CD4-positive, alpha-beta T cell (primary cell): ENCODE measurements at regions of chr13 and their contacts with region 1.

Region 1: DNA sequence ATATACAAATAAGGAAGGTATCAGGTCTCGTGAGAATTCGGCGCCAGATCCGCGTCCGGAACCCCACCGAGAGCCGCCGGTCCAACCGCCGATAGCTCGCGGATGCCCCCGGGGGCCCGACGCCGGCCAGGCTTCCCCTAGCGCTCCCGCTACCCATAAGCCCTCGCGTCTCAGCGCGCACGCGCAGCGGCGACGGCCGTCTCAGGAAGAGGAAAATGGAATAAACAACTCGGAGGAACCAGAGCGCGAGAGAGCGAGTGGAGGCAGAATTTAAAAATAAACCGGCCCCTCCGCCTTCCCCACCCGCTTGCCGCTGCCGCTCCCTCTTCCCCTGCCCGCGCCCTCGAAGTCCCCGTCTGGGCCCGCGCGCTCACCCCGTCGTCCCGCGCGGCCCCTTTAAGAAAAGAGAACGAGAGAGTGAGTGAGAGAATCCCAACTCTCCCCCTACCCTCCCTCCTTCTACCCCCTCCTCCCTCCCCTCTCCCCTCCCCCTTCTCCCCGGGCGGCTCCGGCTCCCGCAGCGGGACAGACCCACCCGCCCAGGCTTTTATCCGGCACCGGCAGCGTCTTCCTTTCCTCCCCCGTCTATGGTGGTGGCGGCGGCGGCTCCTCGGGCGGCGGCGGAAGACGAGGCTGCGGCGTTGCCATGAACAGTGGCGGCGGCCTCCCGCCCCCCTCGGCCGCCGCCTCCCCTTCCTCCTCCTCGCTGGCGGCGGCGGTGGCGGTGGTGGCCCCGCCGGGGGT is at the start of gene PAN3:
- DNase-seq: peak; percentile 85 to 97 (median 91)
- ATAC-seq: peak; percentile 50
- H3K4me3 ChIP-seq: peak within 1 kb of the TSS; percentile 81
- H3K4me3 Mint-ChIP-seq: peak within 1 kb of the TSS; percentile 95
- H3K27ac ChIP-seq: peak within 1 kb of the TSS; percentile 93 to 99
- H3K27ac Mint-ChIP-seq: peak within 1 kb of the TSS; percentile 99
- H3K4me1 ChIP-seq: peaks cover 37% of the 10 kb centered on the region
- H3K4me1 Mint-ChIP-seq: peaks cover 53% of the 10 kb centered on the region
- H3K27me3 ChIP-seq: no peaks in the 10 kb centered on the region
- H3K27me3 Mint-ChIP-seq: no peaks in the 10 kb centered on the region
- CTCF ChIP-seq: no peak
- total RNA-seq, gene PAN3: 56.9 to 59.5 TPM

Region 2: DNA sequence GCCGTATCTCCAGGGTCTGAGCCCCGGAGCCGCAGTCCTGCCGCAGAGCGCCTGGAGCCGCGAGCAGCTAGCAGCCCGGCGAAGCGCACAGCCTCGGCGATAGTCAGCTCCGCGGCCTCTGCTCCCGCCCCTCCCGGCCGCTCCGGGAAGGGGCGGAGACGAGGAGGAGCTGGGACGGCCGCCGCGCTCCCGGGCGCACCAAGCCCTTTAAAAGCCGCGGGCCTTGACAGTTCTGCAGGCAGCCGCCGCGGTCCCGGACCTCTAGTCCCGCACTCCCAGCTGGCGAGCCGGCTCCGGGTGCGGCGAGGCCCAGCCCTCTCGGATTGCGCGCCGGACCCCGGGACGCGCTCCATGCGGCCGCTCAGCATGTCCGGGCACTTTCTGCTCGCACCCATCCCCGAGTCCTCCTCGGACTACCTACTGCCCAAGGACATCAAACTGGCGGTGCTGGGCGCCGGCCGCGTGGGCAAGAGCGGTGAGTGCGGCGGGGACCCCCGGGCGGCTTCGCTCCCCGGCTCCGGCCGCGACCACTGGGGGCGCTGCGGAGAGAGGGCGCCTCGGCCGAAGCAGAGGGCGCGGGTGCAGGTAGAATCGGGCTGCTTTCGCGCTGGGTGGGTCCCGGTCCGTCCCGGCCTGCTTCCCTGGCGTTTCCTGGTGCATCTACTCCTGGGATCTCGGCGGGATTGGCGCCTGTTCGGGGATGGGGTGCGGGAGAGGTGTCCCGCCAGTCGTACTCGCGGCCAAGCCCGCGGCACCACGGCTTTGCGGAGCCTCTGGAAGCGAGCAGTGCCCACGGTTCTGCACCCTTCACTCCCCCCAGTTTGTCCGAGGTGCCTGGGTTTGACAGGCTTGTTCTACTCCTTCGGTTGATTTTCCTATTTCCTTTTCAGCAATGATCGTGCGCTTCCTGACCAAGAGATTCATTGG is 867.3 kb before region 1 on chr13 and contains the start of gene RASL11A:
- CTCF ChIA-PET with region 1: no interaction called
- POLR2A ChIA-PET with region 1: no interaction called
- intact Hi-C with region 1: loop called in 1 of 2 experiments (anchors 5 kb)
- DNase-seq: peak; percentile 52 to 85 (median 68)
- ATAC-seq: peak; percentile 91
- H3K4me3 ChIP-seq: peak within 1 kb of the TSS; percentile 73
- H3K4me3 Mint-ChIP-seq: peak within 1 kb of the TSS; percentile 92
- H3K27ac ChIP-seq: no peak within 1 kb of the TSS
- H3K27ac Mint-ChIP-seq: peak within 1 kb of the TSS; percentile 68
- H3K4me1 ChIP-seq: peaks cover 17% of the 10 kb centered on the region
- H3K4me1 Mint-ChIP-seq: peaks cover 34% of the 10 kb centered on the region
- H3K27me3 ChIP-seq: peaks cover 5 to 8% of the 10 kb centered on the region in 2 experiments
- H3K27me3 Mint-ChIP-seq: peaks cover 14% of the 10 kb centered on the region
- CTCF ChIP-seq: peak; percentile 99
- total RNA-seq, gene RASL11A: 2.9 to 4.7 TPM

Region 3: GRCh38 chr13:27449936-27450828 is 688.0 kb before region 1 on chr13 and contains the start of gene MTIF3:
- CTCF ChIA-PET with region 1: no interaction called
- POLR2A ChIA-PET with region 1: interaction called, 3 read pairs
- intact Hi-C with region 1: loop called in 1 of 2 experiments (anchors 5 kb)
- DNase-seq: peak; percentile 95 to 99 (median 97)
- ATAC-seq: peak; percentile 79
- H3K4me3 ChIP-seq: peak within 1 kb of the TSS; percentile 83
- H3K4me3 Mint-ChIP-seq: peak within 1 kb of the TSS; percentile 98
- H3K27ac ChIP-seq: peak within 1 kb of the TSS; percentile 95 to 97
- H3K27ac Mint-ChIP-seq: peak within 1 kb of the TSS; percentile 97
- H3K4me1 ChIP-seq: peaks cover 58% of the 10 kb centered on the region
- H3K4me1 Mint-ChIP-seq: peaks cover 74% of the 10 kb centered on the region
- H3K27me3 ChIP-seq: no peaks in the 10 kb centered on the region
- H3K27me3 Mint-ChIP-seq: no peaks in the 10 kb centered on the region
- CTCF ChIP-seq: peak; percentile 31
- total RNA-seq, gene MTIF3: 13.6 to 14.5 TPM

Region 4: DNA sequence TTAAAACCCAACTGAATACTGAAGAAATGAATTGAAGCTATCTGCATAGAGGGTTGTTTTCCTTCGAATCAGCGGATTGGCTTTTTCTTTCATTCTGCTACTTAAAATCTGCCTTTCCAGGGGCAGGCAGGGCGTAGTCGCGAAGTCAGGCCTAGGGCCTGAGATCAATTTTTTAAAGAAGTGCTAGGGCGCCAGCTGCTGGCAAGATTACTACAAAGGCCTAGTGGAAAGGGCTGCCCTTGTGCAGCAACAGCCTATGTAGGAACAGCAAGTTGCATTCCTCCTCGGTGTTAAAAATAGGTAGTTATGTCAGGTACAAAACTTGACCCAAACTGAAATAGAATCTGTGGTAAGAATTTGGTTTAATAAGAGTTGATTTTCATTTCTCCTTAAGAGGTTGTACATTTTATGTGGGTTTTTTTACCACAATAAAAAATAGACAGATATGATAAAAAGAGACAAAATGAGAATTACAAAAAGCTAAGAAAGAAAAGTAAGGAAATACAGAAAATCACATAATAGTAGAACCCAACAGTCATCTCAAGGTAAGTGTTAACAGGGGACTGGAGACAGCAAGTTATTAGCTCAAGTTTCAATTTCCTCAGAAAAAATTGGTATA is 140.2 kb before region 1 on chr13:
- CTCF ChIA-PET with region 1: no interaction called
- POLR2A ChIA-PET with region 1: no interaction called
- intact Hi-C with region 1: no loop called
- DNase-seq: peak in 6 of 14 experiments; percentile 6 to 27 (median 24)
- ATAC-seq: peak; percentile 34
- H3K4me3 ChIP-seq: no peak overlapping the region
- H3K4me3 Mint-ChIP-seq: no peak overlapping the region
- H3K27ac ChIP-seq: no peak overlapping the region
- H3K27ac Mint-ChIP-seq: no peak overlapping the region
- H3K4me1 ChIP-seq: no peaks in the 10 kb centered on the region
- H3K4me1 Mint-ChIP-seq: peaks cover 7% of the 10 kb centered on the region
- H3K27me3 ChIP-seq: no peaks in the 10 kb centered on the region
- H3K27me3 Mint-ChIP-seq: no peaks in the 10 kb centered on the region
- CTCF ChIP-seq: no peak

Region 5: DNA sequence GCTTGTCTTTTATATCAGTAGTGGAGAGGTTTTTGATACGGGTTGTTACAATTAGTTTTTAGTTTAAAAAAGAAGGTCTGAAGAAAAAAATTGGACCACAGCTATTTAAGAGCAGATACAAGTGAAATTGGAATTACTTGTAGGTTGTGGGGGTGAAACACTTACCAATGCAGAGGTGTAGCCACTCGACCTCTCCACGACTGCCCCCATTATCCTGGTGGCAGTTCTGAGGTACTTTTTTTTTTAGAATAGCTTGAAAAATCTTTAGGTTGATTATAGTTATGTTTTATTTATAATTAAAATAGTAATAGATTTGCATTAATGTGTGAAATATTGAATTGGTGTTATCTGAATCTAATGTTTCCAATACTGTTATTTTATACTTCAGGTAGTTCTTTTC is 60.9 kb after region 1 on chr13:
- CTCF ChIA-PET with region 1: no interaction called
- POLR2A ChIA-PET with region 1: no interaction called
- intact Hi-C with region 1: loop called (anchors 5 kb)
- DNase-seq: no peak
- ATAC-seq: no peak
- H3K4me3 ChIP-seq: no peak overlapping the region
- H3K4me3 Mint-ChIP-seq: no peak overlapping the region
- H3K27ac ChIP-seq: no peak overlapping the region
- H3K27ac Mint-ChIP-seq: no peak overlapping the region
- H3K4me1 ChIP-seq: peaks cover 13% of the 10 kb centered on the region
- H3K4me1 Mint-ChIP-seq: peaks cover 16% of the 10 kb centered on the region
- H3K27me3 ChIP-seq: no peaks in the 10 kb centered on the region
- H3K27me3 Mint-ChIP-seq: no peaks in the 10 kb centered on the region
- CTCF ChIP-seq: no peak

Region 6: DNA sequence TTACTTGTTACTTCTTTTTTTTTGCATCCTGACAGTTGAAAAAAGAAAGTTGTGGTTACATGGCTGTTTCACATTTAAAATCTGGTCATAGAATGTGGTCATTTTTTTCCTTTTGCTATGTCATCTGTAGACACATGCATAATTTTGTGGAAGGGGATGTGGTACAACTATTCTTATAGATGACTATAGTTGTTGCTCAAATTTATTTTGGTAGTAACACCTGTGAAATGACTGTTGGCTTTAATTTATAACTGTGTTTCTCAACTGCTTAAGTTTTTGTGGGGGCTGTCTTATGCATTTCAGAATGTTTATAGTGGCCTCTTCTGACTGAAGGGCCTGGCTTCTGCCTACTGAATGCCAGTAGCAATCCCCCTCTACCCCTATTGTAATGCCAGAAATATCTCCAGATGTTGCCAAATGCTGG is 130.6 kb after region 1 on chr13:
- CTCF ChIA-PET with region 1: no interaction called
- POLR2A ChIA-PET with region 1: no interaction called
- intact Hi-C with region 1: loop called in 1 of 2 experiments (anchors 10 kb)
- DNase-seq: peak in 3 of 14 experiments; percentile 12 to 58 (median 23)
- ATAC-seq: no peak
- H3K4me3 ChIP-seq: no peak overlapping the region
- H3K4me3 Mint-ChIP-seq: no peak overlapping the region
- H3K27ac ChIP-seq: no peak overlapping the region
- H3K27ac Mint-ChIP-seq: peak overlapping the region; percentile 3
- H3K4me1 ChIP-seq: no peaks in the 10 kb centered on the region
- H3K4me1 Mint-ChIP-seq: peaks cover 6% of the 10 kb centered on the region
- H3K27me3 ChIP-seq: no peaks in the 10 kb centered on the region
- H3K27me3 Mint-ChIP-seq: no peaks in the 10 kb centered on the region
- CTCF ChIP-seq: no peak